Ascending aorta (tissue), 2 donors: ENCODE measurements at regions of chr19 and their contacts with region 1.

Region 1: GRCh38 chr19:56140583-56141416 is at the start of gene ZNF444:
- DNase-seq: peak; percentile 98 to 99
- H3K4me3 ChIP-seq: peak within 1 kb of the TSS; percentile 61 to 82
- H3K27ac ChIP-seq: peak within 1 kb of the TSS; percentile 82 to 93
- H3K4me1 ChIP-seq: peaks cover 0 to 15% of the 10 kb centered on the region in 2 donors
- H3K27me3 ChIP-seq: no peaks in the 10 kb centered on the region
- CTCF ChIP-seq: no peak
- total RNA-seq, gene ZNF444: 94.9 TPM

Region 2: DNA sequence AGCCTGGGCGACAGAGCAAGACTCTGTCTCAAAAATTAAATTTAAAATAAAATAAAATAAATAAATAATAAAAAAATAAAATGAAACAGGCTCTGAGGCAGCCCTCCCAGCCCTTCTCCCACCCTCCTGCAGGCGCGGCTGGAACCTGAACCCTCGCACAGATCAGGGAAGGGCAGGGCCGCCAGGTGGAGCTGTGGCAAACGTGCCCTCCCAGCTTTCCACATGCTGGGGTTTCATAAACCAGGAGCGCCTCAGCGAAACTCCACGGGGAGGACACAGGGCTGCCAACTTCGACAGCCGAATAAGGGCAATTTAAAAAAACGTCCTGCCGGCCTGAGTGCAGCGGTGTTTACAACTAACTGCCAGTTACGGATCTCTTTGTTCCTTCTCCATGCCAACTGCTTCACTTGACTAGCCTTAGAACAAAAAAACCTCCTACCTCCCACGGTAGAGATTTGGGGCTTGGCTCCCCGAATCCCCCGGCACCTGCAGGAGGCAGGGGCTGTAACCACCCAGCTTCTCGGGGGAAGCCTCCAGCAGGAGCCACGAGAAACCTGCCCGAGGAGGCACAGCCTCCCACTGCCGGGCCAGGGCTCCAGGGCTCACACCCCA is 35.6 kb before region 1 on chr19:
- intact Hi-C with region 1: loop called (anchors 1 kb)
- DNase-seq: peak in 1 of 2 donors; percentile 86
- H3K4me3 ChIP-seq: peak overlapping the region; percentile 39 to 47
- H3K27ac ChIP-seq: peak overlapping the region; percentile 53 to 56
- H3K4me1 ChIP-seq: peaks cover 12 to 32% of the 10 kb centered on the region in 2 donors
- H3K27me3 ChIP-seq: no peaks in the 10 kb centered on the region
- CTCF ChIP-seq: peak; percentile 65 to 81 (median 81)

Region 3: GRCh38 chr19:56121180-56122167 is 19.3 kb before region 1 on chr19 and contains the start of gene ZNF787:
- intact Hi-C with region 1: loop called (anchors 1 kb)
- DNase-seq: peak; percentile 95 to 100
- H3K4me3 ChIP-seq: peak within 1 kb of the TSS; percentile 93 to 99
- H3K27ac ChIP-seq: peak within 1 kb of the TSS; percentile 89 to 99
- H3K4me1 ChIP-seq: peaks cover 13 to 23% of the 10 kb centered on the region in 2 donors
- H3K27me3 ChIP-seq: no peaks in the 10 kb centered on the region
- CTCF ChIP-seq: no peak
- total RNA-seq, gene ZNF787: 18.1 TPM

Region 4: DNA sequence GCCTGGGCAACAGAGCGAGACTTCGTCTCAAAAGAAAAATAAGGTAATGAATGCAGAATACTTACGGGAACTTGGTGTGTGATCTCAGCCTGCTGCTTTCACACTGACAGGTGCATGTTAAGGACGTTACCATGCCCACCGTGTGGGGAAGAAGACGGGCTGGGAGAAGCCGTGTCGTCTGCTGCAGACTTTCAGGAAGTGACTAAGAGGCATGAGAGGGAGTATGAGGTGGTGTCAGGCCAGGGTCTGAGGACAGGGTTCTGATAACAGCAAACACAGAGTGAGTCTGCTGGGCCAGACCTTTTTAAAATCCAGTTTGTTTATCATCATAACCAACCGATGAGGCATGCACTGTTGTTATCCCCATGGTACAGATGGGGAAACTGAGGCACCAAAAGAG is 21.5 kb after region 1 on chr19:
- intact Hi-C with region 1: no loop called
- DNase-seq: no peak
- H3K4me3 ChIP-seq: no peak overlapping the region
- H3K27ac ChIP-seq: no peak overlapping the region
- H3K4me1 ChIP-seq: no peaks in the 10 kb centered on the region
- H3K27me3 ChIP-seq: no peaks in the 10 kb centered on the region
- CTCF ChIP-seq: no peak

Region 5: GRCh38 chr19:56393119-56394012 is 252.6 kb after region 1 on chr19 and contains the start of gene ZNF582:
- intact Hi-C with region 1: loop called (anchors 2 kb)
- DNase-seq: peak; percentile 89 to 98
- H3K4me3 ChIP-seq: peak within 1 kb of the TSS; percentile 67 to 85
- H3K27ac ChIP-seq: peak within 1 kb of the TSS; percentile 91 to 93
- H3K4me1 ChIP-seq: peaks cover 0 to 3% of the 10 kb centered on the region in 2 donors
- H3K27me3 ChIP-seq: no peaks in the 10 kb centered on the region
- CTCF ChIP-seq: peak; percentile 49 to 80 (median 69)
- total RNA-seq, gene ZNF582: 0.43 TPM

Region 6: GRCh38 chr19:56838909-56839651 is 698.3 kb after region 1 on chr19:
- intact Hi-C with region 1: loop called (anchors 5 kb)
- DNase-seq: peak; percentile 94 to 98
- H3K4me3 ChIP-seq: peak overlapping the region; percentile 57 to 70
- H3K27ac ChIP-seq: peak overlapping the region; percentile 86 to 95
- H3K4me1 ChIP-seq: no peaks in the 10 kb centered on the region
- H3K27me3 ChIP-seq: no peaks in the 10 kb centered on the region
- CTCF ChIP-seq: no peak

Region 7: GRCh38 chr19:57240311-57241090 is 1099.7 kb after region 1 on chr19 and contains the start of gene ZNF805:
- intact Hi-C with region 1: loop called (anchors 5 kb)
- DNase-seq: peak; percentile 80 to 97
- H3K4me3 ChIP-seq: peak within 1 kb of the TSS; percentile 84 to 91
- H3K27ac ChIP-seq: peak within 1 kb of the TSS; percentile 87 to 97
- H3K4me1 ChIP-seq: peaks cover 0 to 8% of the 10 kb centered on the region in 2 donors
- H3K27me3 ChIP-seq: no peaks in the 10 kb centered on the region
- CTCF ChIP-seq: peak in 1 of 3 experiments; percentile 13
- total RNA-seq, gene ZNF805: 22.8 TPM